ENCODE measurements at regions of chr5 and their contacts with region 1.

Region 1: GRCh38 chr5:78320401-78320800 is 25.9 kb upstream of the AP3B1 start:
- DNase-seq: peak; percentile 66
- H3K4me3 ChIP-seq: no peak overlapping the region
- H3K27ac ChIP-seq: no peak overlapping the region
- H3K4me1 ChIP-seq: no peaks in the 10 kb centered on the region
- H3K27me3 ChIP-seq: no peaks in the 10 kb centered on the region
- CTCF ChIP-seq: peak; percentile 27
- POLR2A ChIP-seq: no peak

Region 2: DNA sequence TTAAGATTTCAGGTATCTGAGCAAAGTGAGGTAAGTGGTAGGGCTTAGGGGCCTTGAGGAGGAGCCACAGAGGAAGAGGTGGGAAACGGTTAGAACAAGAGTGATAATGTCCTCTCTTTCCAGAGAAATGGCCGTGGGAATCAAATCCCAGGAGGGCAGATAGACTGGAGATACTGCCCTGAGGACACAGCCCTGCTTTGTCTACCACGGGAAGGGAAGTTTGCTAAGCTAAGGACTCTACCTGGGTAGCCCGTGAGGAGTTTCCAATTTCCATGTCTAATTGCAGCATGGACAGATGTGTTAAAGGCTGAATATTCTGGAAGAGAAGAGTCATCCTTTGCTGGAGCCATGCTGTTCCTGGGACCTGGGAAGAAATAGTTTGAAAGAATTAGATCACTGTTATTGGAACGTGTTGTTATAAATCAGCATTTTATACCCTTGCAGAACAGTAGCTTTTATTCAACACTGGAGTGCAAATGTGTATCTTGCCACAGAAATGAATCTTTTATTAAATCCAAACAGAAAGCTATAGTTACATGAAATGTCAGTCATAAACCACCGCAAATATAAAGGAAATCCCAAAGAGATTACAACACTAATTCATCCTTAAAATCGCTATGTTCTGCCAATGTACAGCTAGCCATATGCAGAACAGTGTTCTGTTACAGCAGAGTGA is 461.3 kb after region 1 on chr5:
- CTCF ChIA-PET with region 1: no interaction called
- POLR2A ChIA-PET with region 1: no interaction called
- dilution Hi-C with region 1: no loop called
- intact Hi-C with region 1: no loop called
- DNase-seq: no peak
- H3K4me3 ChIP-seq: no peak overlapping the region
- H3K27ac ChIP-seq: no peak overlapping the region
- H3K4me1 ChIP-seq: peaks cover 14% of the 10 kb centered on the region
- H3K27me3 ChIP-seq: no peaks in the 10 kb centered on the region
- CTCF ChIP-seq: no peak
- POLR2A ChIP-seq: no peak

Region 3: GRCh38 chr5:78953092-78953800 is 632.8 kb after region 1 on chr5:
- CTCF ChIA-PET with region 1: no interaction called
- POLR2A ChIA-PET with region 1: no interaction called
- dilution Hi-C with region 1: no loop called
- intact Hi-C with region 1: loop called (anchors 10 kb)
- DNase-seq: no peak
- H3K4me3 ChIP-seq: no peak overlapping the region
- H3K27ac ChIP-seq: no peak overlapping the region
- H3K4me1 ChIP-seq: no peaks in the 10 kb centered on the region
- H3K27me3 ChIP-seq: no peaks in the 10 kb centered on the region
- CTCF ChIP-seq: no peak
- POLR2A ChIP-seq: no peak

Region 4: GRCh38 chr5:78964887-78965286 is 644.5 kb after region 1 on chr5:
- CTCF ChIA-PET with region 1: interaction called, 14 read pairs
- POLR2A ChIA-PET with region 1: no interaction called
- dilution Hi-C with region 1: no loop called
- intact Hi-C with region 1: no loop called
- DNase-seq: peak; percentile 79
- H3K4me3 ChIP-seq: no peak overlapping the region
- H3K27ac ChIP-seq: no peak overlapping the region
- H3K4me1 ChIP-seq: no peaks in the 10 kb centered on the region
- H3K27me3 ChIP-seq: no peaks in the 10 kb centered on the region
- CTCF ChIP-seq: peak in 1 of 2 donors; percentile 18
- POLR2A ChIP-seq: no peak